CD4-positive, alpha-beta memory T cell (primary cell): ENCODE measurements at regions of chr17 and their contacts with region 1.

Region 1: GRCh38 chr17:2090804-2091534 is 36.1 kb downstream of the HIC1 start:
- DNase-seq: no peak
- H3K4me3 ChIP-seq: no peak overlapping the region
- H3K4me3 Mint-ChIP-seq: peak overlapping the region; percentile 90 to 100 (median 94)
- H3K27ac ChIP-seq: peak overlapping the region; percentile 58
- H3K27ac Mint-ChIP-seq: peak overlapping the region in 6 of 7 donors; percentile 62 to 97 (median 95)
- H3K4me1 ChIP-seq: peaks cover 50% of the 10 kb centered on the region
- H3K4me1 Mint-ChIP-seq: peaks cover 38 to 62% (median 51%) of the 10 kb centered on the region in 4 donors
- H3K27me3 ChIP-seq: no peaks in the 10 kb centered on the region
- H3K27me3 Mint-ChIP-seq: no peaks in the 10 kb centered on the region

Region 2: GRCh38 chr17:2101448-2102257 is 10.7 kb after region 1 on chr17:
- CTCF ChIA-PET with region 1: interaction called, 8 read pairs
- POLR2A ChIA-PET with region 1: interaction called, 17 read pairs
- intact Hi-C with region 1: no loop called
- DNase-seq: peak; percentile 42 to 68 (median 47)
- H3K4me3 ChIP-seq: no peak overlapping the region
- H3K4me3 Mint-ChIP-seq: peak overlapping the region in 1 of 8 donors; percentile 15
- H3K27ac ChIP-seq: no peak overlapping the region
- H3K27ac Mint-ChIP-seq: peak overlapping the region; percentile 37 to 85 (median 55)
- H3K4me1 ChIP-seq: peaks cover 6% of the 10 kb centered on the region
- H3K4me1 Mint-ChIP-seq: peaks cover 7 to 17% (median 13%) of the 10 kb centered on the region in 4 donors
- H3K27me3 ChIP-seq: no peaks in the 10 kb centered on the region
- H3K27me3 Mint-ChIP-seq: no peaks in the 10 kb centered on the region

Region 3: DNA sequence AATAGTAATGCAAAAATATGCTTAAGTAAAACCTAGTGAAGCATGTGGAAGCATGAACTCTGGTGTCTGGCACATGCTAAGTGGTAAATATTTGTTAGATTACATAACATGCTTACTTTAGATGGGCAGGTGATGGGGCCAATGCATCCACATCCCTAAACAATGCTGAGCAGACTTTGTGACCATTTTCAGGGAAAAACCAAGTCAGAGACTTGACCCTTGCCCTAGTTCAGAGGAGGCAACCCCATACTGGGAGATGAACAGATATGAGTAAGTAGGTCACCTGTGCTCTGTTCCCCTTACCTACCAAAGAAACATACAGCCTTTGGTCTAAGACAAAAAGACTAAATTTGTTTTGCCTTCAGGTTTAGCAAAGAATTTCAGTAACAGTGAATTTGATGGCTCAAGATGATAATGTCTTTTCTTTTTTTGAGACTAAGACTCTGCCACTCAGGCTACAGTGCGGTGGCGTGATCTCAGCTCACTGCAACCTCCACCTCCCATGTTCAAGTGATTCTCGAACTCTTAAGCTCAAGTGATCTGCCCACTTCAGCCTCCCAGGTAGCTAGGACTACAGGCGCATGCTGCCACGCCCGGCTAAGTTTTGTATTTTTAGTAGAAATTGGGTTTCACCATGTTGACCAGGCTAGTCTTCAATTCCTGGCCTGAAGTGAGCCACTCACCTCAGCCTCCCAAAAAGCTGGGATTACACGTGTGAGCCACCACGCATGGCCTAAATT is 55.3 kb after region 1 on chr17:
- CTCF ChIA-PET with region 1: interaction called, 3 read pairs
- POLR2A ChIA-PET with region 1: no interaction called
- intact Hi-C with region 1: loop called (anchors 10 kb)
- DNase-seq: peak in 4 of 5 donors; percentile 15 to 45 (median 24)
- H3K4me3 ChIP-seq: no peak overlapping the region
- H3K4me3 Mint-ChIP-seq: peak overlapping the region in 5 of 8 donors; percentile 9 to 46 (median 21)
- H3K27ac ChIP-seq: no peak overlapping the region
- H3K27ac Mint-ChIP-seq: peak overlapping the region; percentile 70 to 93 (median 83)
- H3K4me1 ChIP-seq: peaks cover 14% of the 10 kb centered on the region
- H3K4me1 Mint-ChIP-seq: peaks cover 9 to 11% (median 11%) of the 10 kb centered on the region in 4 donors
- H3K27me3 ChIP-seq: no peaks in the 10 kb centered on the region
- H3K27me3 Mint-ChIP-seq: no peaks in the 10 kb centered on the region

Region 4: GRCh38 chr17:2157675-2158395 is 66.9 kb after region 1 on chr17:
- CTCF ChIA-PET with region 1: no interaction called
- POLR2A ChIA-PET with region 1: no interaction called
- intact Hi-C with region 1: no loop called
- DNase-seq: no peak
- H3K4me3 ChIP-seq: no peak overlapping the region
- H3K4me3 Mint-ChIP-seq: no peak overlapping the region
- H3K27ac ChIP-seq: no peak overlapping the region
- H3K27ac Mint-ChIP-seq: peak overlapping the region in 2 of 7 donors; percentile 22 to 32
- H3K4me1 ChIP-seq: no peaks in the 10 kb centered on the region
- H3K4me1 Mint-ChIP-seq: peaks cover 0 to 1% (median 0%) of the 10 kb centered on the region in 4 donors
- H3K27me3 ChIP-seq: no peaks in the 10 kb centered on the region
- H3K27me3 Mint-ChIP-seq: no peaks in the 10 kb centered on the region